Astrocyte of the cerebellum (primary cell): ENCODE measurements at regions of chr2 and their contacts with region 1.

Region 1: GRCh38 chr2:26530696-26531095 is 52.8 kb upstream of the OTOF start:
- DNase-seq: no peak
- H3K4me3 ChIP-seq: no peak overlapping the region
- CTCF ChIP-seq: no peak

Region 2: DNA sequence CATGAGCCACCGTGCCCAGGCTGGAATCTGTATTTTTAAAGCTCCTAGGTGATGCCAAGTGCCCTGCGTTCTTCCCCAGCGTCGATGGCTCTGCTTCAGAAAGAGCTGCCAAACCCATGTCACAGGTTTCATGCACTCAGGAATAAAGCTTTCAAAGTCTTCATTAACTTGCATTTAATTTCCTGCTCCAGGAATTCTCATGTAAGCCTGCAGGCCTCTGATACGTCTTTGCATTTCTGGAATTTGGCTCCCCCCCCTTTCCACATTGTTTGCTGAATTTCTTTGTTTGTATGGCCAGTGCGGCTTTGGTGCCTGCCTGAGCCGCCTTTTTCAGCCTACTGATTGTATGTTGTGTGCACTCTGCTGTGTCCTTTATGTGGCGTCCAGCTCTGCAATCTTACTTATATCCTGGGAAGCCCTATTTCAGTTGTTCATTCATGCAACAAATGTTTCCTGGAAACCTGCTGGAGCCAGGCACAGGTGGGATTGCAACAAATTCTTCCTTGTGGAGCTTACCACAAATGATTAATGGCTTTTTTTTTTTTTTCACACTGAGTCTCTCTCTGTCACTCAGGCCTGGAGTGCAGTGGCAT is 34.9 kb before region 1 on chr2:
- in situ Hi-C with region 1: loop called (anchors 5 kb)
- DNase-seq: peak; percentile 40
- H3K4me3 ChIP-seq: no peak overlapping the region
- CTCF ChIP-seq: no peak

Region 3: GRCh38 chr2:26569216-26570082 is 38.8 kb after region 1 on chr2:
- in situ Hi-C with region 1: loop called (anchors 5 kb)
- DNase-seq: no peak
- H3K4me3 ChIP-seq: no peak overlapping the region
- CTCF ChIP-seq: no peak